Posterior vena cava (tissue), 2 donors: ENCODE measurements at regions of chr18 and their contacts with region 1.

Region 1: GRCh38 chr18:77173275-77174030 is 40.9 kb upstream of the MBP start:
- DNase-seq: no peak

Region 2: GRCh38 chr18:77191071-77191751 is 17.8 kb after region 1 on chr18:
- intact Hi-C with region 1: no loop called
- DNase-seq: no peak

Region 3: GRCh38 chr18:77223653-77224052 is 50.2 kb after region 1 on chr18:
- intact Hi-C with region 1: no loop called
- DNase-seq: no peak

Region 4: GRCh38 chr18:77234504-77235365 is 61.3 kb after region 1 on chr18:
- intact Hi-C with region 1: no loop called
- DNase-seq: peak; percentile 62

Region 5: GRCh38 chr18:78473563-78473962 is 1300.1 kb after region 1 on chr18:
- intact Hi-C with region 1: loop called in 1 of 2 experiments (anchors 5 kb)
- DNase-seq: no peak